PC-3 (cell line): ENCODE measurements at regions of chr21 and their contacts with region 1.

Region 1: GRCh38 chr21:45880097-45881068 is 101.2 kb upstream of the COL6A1 start:
- DNase-seq: peak; percentile 91
- ATAC-seq: peak; percentile 98
- H3K4me3 ChIP-seq: no peak overlapping the region
- H3K27ac ChIP-seq: no peak overlapping the region
- H3K4me1 ChIP-seq: peaks cover 7% of the 10 kb centered on the region
- H3K27me3 ChIP-seq: no peaks in the 10 kb centered on the region
- CTCF ChIP-seq: peak; percentile 90

Region 2: GRCh38 chr21:44522456-44523204 is 1357.8 kb before region 1 on chr21:
- CTCF ChIA-PET with region 1: no interaction called
- POLR2A ChIA-PET with region 1: no interaction called
- intact Hi-C with region 1: no loop called
- DNase-seq: no peak
- ATAC-seq: no peak
- H3K4me3 ChIP-seq: no peak overlapping the region
- H3K27ac ChIP-seq: no peak overlapping the region
- H3K4me1 ChIP-seq: no peaks in the 10 kb centered on the region
- H3K27me3 ChIP-seq: no peaks in the 10 kb centered on the region
- CTCF ChIP-seq: no peak

Region 3: DNA sequence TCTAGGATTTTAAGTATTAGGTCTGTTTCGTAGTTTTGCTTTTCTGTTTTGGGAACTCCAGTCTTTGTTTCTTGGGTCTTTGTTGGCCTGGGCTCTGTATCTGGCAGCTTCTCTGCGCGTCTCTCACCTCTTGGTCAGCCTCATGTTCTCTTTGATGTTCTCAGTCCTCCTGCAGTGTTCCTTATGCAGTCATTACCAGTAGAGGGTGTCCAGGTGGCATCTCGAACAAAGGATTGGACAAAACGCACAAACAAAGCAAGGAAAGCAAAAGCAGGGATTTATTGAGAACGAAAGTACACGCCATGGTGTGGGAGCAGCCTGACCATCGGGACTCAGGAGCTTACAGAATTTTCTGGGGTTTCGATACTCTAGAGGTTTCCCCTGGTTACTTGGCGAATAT is 32.5 kb before region 1 on chr21:
- CTCF ChIA-PET with region 1: interaction called, 3 read pairs
- POLR2A ChIA-PET with region 1: no interaction called
- intact Hi-C with region 1: loop called (anchors 1 kb)
- DNase-seq: no peak
- ATAC-seq: peak; percentile 40; the same call in 1 of the 2 replicates
- H3K4me3 ChIP-seq: no peak overlapping the region
- H3K27ac ChIP-seq: no peak overlapping the region
- H3K4me1 ChIP-seq: no peaks in the 10 kb centered on the region
- H3K27me3 ChIP-seq: no peaks in the 10 kb centered on the region
- CTCF ChIP-seq: no peak; the same call in 1 of the 2 replicates

Region 4: DNA sequence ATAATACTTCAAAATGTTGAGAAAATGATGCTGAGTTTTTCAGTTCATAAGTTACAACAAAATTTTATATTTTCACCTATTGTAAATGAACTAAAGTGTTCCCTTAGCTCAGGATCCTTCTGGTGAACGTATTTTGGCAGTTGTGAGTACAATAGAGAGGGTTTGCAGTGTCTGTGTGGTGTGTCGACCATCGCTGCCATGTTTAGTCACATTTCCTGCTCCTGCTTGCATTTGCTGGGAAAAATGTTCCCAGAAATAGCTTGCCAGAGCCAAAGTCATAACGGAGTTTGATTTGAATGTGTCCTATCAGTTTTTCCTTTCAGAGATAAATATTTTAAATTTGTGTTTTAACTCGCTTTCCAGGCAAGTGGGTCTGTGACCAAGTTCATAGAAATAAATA is 15.9 kb before region 1 on chr21:
- CTCF ChIA-PET with region 1: no interaction called
- POLR2A ChIA-PET with region 1: no interaction called
- intact Hi-C with region 1: no loop called
- DNase-seq: no peak
- ATAC-seq: no peak
- H3K4me3 ChIP-seq: no peak overlapping the region
- H3K27ac ChIP-seq: no peak overlapping the region
- H3K4me1 ChIP-seq: peaks cover 19% of the 10 kb centered on the region
- H3K27me3 ChIP-seq: no peaks in the 10 kb centered on the region
- CTCF ChIP-seq: no peak